CD8-positive, alpha-beta T cell (primary cell): ENCODE measurements at regions of chr10 and their contacts with region 1.

Region 1: DNA sequence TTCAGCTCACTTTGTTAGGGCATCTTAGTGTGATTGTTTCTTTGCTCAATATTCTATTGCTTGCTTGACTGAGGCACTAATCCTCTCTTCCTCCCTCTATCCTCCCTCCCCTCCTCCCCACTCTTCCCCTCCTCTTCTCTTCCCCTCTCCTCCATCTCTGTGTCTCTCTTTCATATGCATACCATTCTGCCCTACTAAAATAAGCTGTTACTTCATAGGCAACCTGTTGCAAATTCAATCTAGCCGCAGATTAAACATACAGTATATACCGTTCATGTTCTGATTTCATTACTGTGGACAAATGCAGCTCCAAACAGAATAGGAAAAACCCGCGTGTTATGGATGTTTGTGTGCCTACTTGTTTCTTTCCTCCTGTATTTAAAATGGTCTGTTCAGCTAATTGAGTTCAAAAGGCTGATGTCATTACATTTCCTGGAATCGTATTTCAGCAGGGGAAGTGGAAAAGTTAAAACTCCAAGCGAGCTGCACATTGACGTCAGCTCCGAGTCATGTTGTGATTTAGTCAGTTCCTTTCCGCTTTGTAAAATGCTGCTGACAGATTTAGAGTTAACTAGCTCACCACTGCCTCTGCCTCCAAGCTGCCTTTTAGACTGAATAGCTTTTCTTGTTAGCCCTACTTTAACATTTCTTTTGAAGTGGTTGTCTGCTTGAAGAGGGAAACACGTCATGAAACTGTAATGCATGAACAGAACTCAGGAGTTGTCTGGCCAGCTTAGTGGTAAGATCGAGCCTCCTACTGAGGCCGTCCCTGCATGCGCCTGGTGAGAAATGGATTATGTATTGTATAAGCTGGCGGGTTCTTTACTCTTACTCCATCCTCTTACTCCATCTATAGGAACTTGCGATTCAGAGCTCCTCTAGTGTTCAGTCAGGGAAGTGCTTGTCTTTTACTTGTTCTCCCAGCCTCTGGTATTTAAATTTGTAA is 69.0 kb downstream of the CREM start:
- DNase-seq: peak; percentile 39 to 99 (median 73)
- ATAC-seq: peak; percentile 82
- H3K4me3 ChIP-seq: peak overlapping the region; percentile 45 to 50
- H3K4me3 Mint-ChIP-seq: peak overlapping the region; percentile 83
- H3K27ac ChIP-seq: peak overlapping the region; percentile 94 to 97
- H3K27ac Mint-ChIP-seq: peak overlapping the region; percentile 93
- H3K4me1 ChIP-seq: peaks cover 11% of the 10 kb centered on the region
- H3K4me1 Mint-ChIP-seq: peaks cover 22% of the 10 kb centered on the region
- H3K27me3 ChIP-seq: no peaks in the 10 kb centered on the region
- H3K27me3 Mint-ChIP-seq: no peaks in the 10 kb centered on the region
- CTCF ChIP-seq: peak; percentile 94

Region 2: GRCh38 chr10:35119378-35119777 is 76.3 kb before region 1 on chr10:
- CTCF ChIA-PET with region 1: interaction called, 63 read pairs
- POLR2A ChIA-PET with region 1: interaction called, 6 read pairs
- intact Hi-C with region 1: loop called in 1 of 2 experiments (anchors 1 kb)
- DNase-seq: no peak
- ATAC-seq: no peak
- H3K4me3 ChIP-seq: no peak overlapping the region
- H3K4me3 Mint-ChIP-seq: no peak overlapping the region
- H3K27ac ChIP-seq: no peak overlapping the region
- H3K27ac Mint-ChIP-seq: no peak overlapping the region
- H3K4me1 ChIP-seq: no peaks in the 10 kb centered on the region
- H3K4me1 Mint-ChIP-seq: no peaks in the 10 kb centered on the region
- H3K27me3 ChIP-seq: peaks cover 0 to 4% of the 10 kb centered on the region in 2 experiments
- H3K27me3 Mint-ChIP-seq: no peaks in the 10 kb centered on the region
- CTCF ChIP-seq: no peak

Region 3: GRCh38 chr10:35135861-35136260 is 59.8 kb before region 1 on chr10:
- CTCF ChIA-PET with region 1: interaction called, 11 read pairs
- POLR2A ChIA-PET with region 1: interaction called, 6 read pairs
- intact Hi-C with region 1: loop called in 1 of 2 experiments (anchors 1 kb)
- DNase-seq: peak in 2 of 9 experiments; percentile 35 to 52
- ATAC-seq: no peak
- H3K4me3 ChIP-seq: no peak overlapping the region
- H3K4me3 Mint-ChIP-seq: peak overlapping the region; percentile 23
- H3K27ac ChIP-seq: peak overlapping the region in 1 of 2 experiments; percentile 31
- H3K27ac Mint-ChIP-seq: peak overlapping the region; percentile 79
- H3K4me1 ChIP-seq: peaks cover 30% of the 10 kb centered on the region
- H3K4me1 Mint-ChIP-seq: peaks cover 35% of the 10 kb centered on the region
- H3K27me3 ChIP-seq: no peaks in the 10 kb centered on the region
- H3K27me3 Mint-ChIP-seq: no peaks in the 10 kb centered on the region
- CTCF ChIP-seq: no peak

Region 4: GRCh38 chr10:35184527-35185171 is 11.0 kb before region 1 on chr10:
- CTCF ChIA-PET with region 1: interaction called, 22 read pairs
- POLR2A ChIA-PET with region 1: interaction called, 3 read pairs
- intact Hi-C with region 1: no loop called
- DNase-seq: no peak
- ATAC-seq: no peak
- H3K4me3 ChIP-seq: no peak overlapping the region
- H3K4me3 Mint-ChIP-seq: no peak overlapping the region
- H3K27ac ChIP-seq: no peak overlapping the region
- H3K27ac Mint-ChIP-seq: no peak overlapping the region
- H3K4me1 ChIP-seq: no peaks in the 10 kb centered on the region
- H3K4me1 Mint-ChIP-seq: no peaks in the 10 kb centered on the region
- H3K27me3 ChIP-seq: no peaks in the 10 kb centered on the region
- H3K27me3 Mint-ChIP-seq: no peaks in the 10 kb centered on the region
- CTCF ChIP-seq: no peak

Region 5: DNA sequence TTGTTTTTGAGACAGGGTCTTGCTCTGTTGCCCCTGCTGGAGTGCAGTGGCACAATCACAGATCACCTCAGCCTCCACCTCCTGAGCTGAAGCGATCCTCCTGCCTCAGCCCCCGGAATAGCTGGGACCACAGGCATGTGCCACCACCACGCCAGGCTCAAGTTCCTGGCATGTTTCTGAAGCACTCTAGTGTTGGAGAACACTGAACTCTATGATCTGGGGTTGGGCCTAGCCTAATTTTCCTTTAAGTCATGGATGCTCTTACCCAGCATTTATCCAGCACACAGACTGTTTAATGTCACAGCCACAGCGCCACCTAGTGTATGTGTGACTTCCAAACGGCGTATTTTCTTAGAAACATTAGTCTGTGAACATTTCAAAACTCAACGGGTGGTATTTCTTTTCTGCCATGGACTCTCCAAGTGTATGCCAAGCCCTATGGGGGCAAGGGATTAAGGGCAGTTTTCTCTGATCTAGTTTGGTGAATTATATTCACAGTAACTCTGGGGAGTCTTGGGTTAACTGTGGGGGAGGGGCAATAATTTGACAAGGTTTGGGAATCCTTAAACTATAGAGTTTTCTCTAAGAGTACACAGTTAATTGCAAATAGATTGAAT is 22.8 kb after region 1 on chr10:
- CTCF ChIA-PET with region 1: interaction called, 30 read pairs
- POLR2A ChIA-PET with region 1: interaction called, 4 read pairs
- intact Hi-C with region 1: loop called (anchors 1 to 2 kb)
- DNase-seq: peak; percentile 62 to 90 (median 82)
- ATAC-seq: peak; percentile 84
- H3K4me3 ChIP-seq: no peak overlapping the region
- H3K4me3 Mint-ChIP-seq: no peak overlapping the region
- H3K27ac ChIP-seq: no peak overlapping the region
- H3K27ac Mint-ChIP-seq: no peak overlapping the region
- H3K4me1 ChIP-seq: peaks cover 6% of the 10 kb centered on the region
- H3K4me1 Mint-ChIP-seq: peaks cover 6% of the 10 kb centered on the region
- H3K27me3 ChIP-seq: no peaks in the 10 kb centered on the region
- H3K27me3 Mint-ChIP-seq: peaks cover 3% of the 10 kb centered on the region
- CTCF ChIP-seq: peak; percentile 73